AG04449 (cell line): ENCODE measurements at regions of chr1 and their contacts with region 1.

Region 1: DNA sequence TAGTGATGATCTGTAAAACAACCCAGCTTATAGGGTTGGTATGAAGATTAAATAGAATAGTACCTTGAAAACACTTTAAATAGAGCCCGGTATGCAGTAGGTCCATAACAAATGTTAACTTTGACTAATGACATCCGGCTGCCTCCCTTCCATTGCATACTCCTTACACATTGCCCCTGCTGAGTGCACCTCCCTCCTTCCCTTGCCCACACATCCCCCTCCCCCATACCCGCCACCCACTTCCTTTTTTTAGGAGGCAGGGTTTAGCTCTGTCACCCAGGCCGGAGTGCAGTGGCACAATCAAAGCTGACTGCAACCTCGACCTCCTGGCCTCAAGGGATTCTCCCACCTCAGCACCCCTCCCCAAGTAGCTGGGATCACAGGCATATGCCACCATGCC is 24.4 kb upstream of the ZC3H12A start:
- DNase-seq: no peak
- H3K4me3 ChIP-seq: no peak overlapping the region
- CTCF ChIP-seq: no peak

Region 2: GRCh38 chr1:37317870-37318467 is 132.0 kb before region 1 on chr1:
- CTCF ChIA-PET with region 1: no interaction called
- POLR2A ChIA-PET with region 1: no interaction called
- DNase-seq: no peak
- H3K4me3 ChIP-seq: no peak overlapping the region
- CTCF ChIP-seq: no peak

Region 3: GRCh38 chr1:37434292-37434907 is 15.5 kb before region 1 on chr1:
- CTCF ChIA-PET with region 1: interaction called, 28 read pairs
- POLR2A ChIA-PET with region 1: no interaction called
- DNase-seq: no peak
- H3K4me3 ChIP-seq: no peak overlapping the region
- CTCF ChIP-seq: peak; percentile 97

Region 4: DNA sequence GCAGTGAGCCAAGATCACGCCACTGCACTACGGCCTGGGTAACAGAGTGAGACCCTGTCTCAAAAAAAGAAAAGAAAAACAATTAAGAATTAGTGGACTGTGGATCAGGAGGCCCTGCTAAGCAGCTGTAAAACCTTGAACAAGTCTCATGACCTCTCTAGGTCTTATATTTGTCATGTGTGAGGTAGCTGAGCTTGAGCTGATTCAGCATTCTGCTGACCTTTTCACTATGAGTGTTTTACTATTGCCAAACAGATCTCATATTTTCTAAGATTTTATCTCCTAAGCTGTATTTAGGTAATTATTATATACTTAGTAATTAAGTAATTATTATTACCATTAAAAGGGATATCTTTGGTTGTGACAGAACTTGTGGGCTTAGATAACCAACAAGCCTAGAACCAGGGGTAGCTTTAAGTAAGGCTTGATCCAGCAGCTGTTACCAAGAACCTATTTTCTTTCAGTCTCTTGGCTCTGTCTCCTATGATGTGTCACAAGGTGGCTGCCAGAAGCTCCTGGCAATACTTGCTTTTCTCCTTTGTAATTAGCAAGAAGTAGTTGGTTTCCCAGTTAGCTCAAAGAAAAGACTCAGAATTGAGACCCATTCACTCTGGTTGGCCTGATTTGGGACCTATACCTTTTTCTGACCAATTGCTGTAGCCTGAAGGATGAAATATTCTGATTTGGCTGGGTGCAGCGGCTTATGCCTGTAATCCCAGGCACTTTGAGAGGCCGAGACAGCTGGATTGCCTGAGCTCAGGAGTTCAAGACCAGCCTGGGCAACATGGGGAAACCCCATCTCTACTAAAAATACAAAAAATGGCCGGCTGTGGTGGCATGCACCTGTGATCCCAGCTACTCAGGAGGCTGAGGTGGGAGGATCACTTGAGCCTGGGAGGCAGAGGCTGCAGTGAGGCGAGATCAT is 15.9 kb after region 1 on chr1:
- CTCF ChIA-PET with region 1: interaction called, 66 read pairs
- POLR2A ChIA-PET with region 1: no interaction called
- DNase-seq: no peak
- H3K4me3 ChIP-seq: no peak overlapping the region
- CTCF ChIP-seq: no peak

Region 5: DNA sequence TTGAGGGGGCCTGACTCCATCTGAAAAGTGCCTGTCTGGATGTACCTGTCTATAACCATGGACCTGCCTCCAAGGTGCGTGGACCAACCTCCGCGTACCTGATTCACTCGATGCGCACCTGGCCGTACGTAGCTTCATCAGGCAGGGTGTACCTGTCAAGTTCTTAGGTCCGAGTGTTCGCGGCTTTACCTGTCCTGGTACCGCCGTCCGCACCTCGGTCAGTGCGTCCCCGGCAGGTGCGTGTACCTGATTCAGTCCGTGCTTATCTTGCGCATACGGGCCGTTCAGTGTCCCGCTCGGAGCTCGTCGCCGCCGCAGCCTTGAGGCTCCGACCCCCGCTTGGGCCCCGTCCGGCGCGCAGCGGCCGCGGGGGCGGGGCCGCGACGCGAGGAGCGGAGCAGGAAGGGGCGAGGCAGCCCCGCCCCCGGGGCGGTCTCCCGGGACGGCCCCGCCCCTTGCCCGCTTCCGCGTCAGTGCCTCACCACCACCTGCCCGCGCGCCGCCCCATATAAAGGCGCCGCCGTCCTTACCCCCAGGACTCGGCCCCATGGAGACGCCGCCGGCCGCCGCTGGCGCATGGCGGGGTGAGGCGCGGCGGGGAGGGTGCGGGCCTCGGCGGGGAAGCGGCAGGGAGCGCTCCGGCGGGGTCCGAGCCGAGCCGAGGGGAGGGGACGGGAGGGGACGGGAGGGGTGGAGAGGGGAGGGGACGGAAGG is 24.3 kb after region 1 on chr1 and contains the start of gene ZC3H12A:
- CTCF ChIA-PET with region 1: interaction called, 62 read pairs
- POLR2A ChIA-PET with region 1: interaction called, 3 read pairs
- DNase-seq: no peak
- H3K4me3 ChIP-seq: peak within 1 kb of the TSS; percentile 93
- CTCF ChIP-seq: no peak

Region 6: GRCh38 chr1:37486680-37487618 is 37.0 kb after region 1 on chr1:
- CTCF ChIA-PET with region 1: interaction called, 521 read pairs
- POLR2A ChIA-PET with region 1: interaction called, 4 read pairs
- DNase-seq: no peak
- H3K4me3 ChIP-seq: no peak overlapping the region
- CTCF ChIP-seq: peak; percentile 98

Region 7: DNA sequence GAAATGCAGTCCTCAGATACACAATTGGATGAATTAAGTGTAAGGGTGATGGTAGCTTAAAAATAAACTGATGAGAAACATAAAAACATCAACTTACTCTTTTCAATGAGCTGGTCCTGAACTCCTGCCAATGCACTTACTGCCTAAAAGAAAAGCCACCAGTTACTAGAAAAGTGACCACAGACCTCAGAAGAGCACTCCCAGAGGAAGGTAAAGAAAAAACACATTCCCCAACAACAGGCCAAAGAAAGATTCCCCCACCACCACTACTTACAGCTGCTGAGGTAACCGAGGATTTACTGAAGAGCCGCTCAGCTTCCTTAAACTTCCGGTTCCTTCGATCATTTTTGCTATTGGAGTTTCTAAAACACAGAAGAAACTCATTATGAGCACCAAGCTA is 59.2 kb after region 1 on chr1:
- CTCF ChIA-PET with region 1: interaction called, 28 read pairs
- POLR2A ChIA-PET with region 1: no interaction called
- DNase-seq: no peak
- H3K4me3 ChIP-seq: no peak overlapping the region
- CTCF ChIP-seq: peak; percentile 6